ENCODE measurements at regions of chr7 and their contacts with region 1.

Region 1: GRCh38 chr7:65722345-65722792 is 150.5 kb upstream of the VKORC1L1 start:
- DNase-seq: peak; percentile 82
- ATAC-seq: peak; percentile 63
- H3K4me3 Mint-ChIP-seq: no peak overlapping the region
- H3K27ac Mint-ChIP-seq: no peak overlapping the region
- H3K4me1 Mint-ChIP-seq: peaks cover 4% of the 10 kb centered on the region
- H3K27me3 Mint-ChIP-seq: no peaks in the 10 kb centered on the region

Region 2: DNA sequence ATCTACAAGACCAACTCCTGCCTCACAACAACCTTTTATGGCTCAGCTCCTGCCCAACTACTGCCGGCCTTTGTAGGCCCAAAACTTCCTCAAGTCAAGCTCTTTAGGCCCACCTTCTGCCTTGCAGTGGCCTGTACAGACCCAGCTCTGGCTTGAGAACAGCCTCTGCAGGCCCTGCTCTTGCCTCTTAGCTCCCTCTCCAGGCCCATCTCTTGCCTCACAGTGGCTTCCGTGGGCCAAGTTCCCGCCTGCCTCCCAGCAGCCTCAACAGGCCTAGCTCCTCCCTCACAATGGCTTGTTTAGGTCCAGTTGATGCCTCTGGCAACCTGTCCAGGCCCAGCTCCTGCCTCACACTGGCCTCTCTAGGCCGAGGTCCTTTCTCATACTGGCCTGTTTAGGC is 118.1 kb after region 1 on chr7:
- CTCF ChIA-PET with region 1: interaction called, 13 read pairs
- POLR2A ChIA-PET with region 1: no interaction called
- DNase-seq: peak; percentile 57
- ATAC-seq: peak; percentile 82
- H3K4me3 Mint-ChIP-seq: no peak overlapping the region
- H3K27ac Mint-ChIP-seq: peak overlapping the region; percentile 19
- H3K4me1 Mint-ChIP-seq: peaks cover 2% of the 10 kb centered on the region
- H3K27me3 Mint-ChIP-seq: no peaks in the 10 kb centered on the region

Region 3: DNA sequence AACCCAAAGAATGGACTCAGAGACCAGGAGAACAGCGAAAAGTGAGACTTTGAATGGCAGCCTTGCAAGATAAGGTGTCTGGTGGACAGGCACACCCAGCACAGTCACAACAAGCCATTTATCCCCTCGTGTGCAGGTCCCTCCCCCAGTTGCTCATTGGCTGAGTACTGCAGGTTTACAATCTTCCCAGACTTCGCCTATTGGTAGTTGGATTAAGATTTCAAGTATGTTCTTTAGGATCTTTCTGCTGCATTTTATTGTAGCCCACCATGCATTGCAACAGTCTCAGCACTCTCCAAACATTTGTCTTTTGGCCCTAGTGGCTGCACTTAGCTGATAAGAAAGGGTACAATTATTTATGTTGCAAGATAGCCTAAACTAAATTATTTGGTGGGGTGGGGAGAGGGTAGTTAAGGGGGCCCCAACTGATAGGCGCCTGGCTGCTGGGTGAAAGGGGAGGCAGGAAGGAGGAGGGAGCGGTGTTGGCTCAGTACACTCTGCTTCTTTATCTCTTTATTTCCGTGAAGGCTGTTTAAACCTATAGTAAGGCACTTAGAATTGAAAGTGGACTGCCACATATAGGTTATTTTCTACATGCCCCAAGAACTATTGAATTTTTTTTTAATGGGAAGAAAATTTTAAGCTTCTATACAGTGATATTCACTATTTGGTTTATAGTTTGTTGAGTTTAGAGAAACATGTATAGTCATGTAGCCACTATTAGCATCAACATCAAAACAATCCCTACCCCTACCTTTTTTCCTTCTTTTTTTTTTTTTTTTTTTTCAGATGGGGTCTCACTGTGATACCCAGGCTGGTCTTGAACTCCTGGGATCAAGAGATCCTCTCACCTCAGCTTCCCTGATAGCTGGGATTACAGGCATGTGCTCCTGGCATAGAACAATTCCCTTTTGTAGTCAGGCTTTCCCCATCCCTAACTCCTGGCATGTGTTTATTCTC is 205.4 kb after region 1 on chr7:
- CTCF ChIA-PET with region 1: no interaction called
- POLR2A ChIA-PET with region 1: no interaction called
- DNase-seq: no peak
- ATAC-seq: no peak
- H3K4me3 Mint-ChIP-seq: no peak overlapping the region
- H3K27ac Mint-ChIP-seq: no peak overlapping the region
- H3K4me1 Mint-ChIP-seq: no peaks in the 10 kb centered on the region
- H3K27me3 Mint-ChIP-seq: no peaks in the 10 kb centered on the region

Measured in activated CD8-positive, alpha-beta T cell treated with anti-CD3 and anti-CD28 coated beads, Interleukin-2, amount 10 ng/mL, durations not matched to agents 7 days and 5 days (primary cell).